ENCODE measurements at regions of chr12 and their contacts with region 1.

Region 1: DNA sequence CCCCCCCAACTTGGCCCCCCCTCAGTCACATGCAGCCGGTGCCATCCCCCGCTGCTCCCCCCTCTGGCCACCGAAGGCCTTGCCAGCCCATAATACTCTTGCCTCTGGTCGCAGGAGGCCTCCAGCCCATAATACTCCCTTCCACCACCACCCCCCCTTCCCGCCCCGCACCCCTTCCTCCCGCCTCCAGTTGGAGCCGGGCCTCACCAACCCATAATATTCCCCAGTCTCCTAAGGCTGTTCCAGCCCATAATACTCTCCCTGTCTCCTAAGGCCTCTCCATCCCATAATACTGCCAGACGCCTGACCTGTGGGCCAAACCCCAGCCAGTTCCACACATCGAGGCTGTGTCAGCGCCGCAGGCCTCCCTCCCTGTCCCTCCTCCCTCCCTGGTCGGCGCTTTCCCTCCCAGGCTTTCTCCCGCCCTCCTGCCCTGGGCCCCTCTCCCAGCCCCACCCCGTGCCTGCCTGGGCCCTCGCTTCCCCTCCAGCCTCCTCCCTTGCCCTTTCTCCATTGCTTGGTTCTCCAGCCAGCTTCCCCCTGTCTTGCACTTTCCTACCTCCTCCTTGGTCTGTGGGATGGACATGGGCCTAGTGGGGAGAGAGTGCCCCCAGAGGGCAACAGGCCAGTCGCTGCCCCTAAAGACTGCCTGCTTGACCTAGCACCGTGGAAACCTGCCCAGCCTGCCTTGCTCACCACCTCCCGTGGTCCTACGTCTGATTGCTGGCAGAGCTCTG is 6.8 kb upstream of the CHD4 start:
- DNase-seq: peak; percentile 80 to 92 (median 90)
- H3K4me3 ChIP-seq: peak overlapping the region in 29 of 59 donors; percentile 1 to 65 (median 23)
- H3K27ac ChIP-seq: peak overlapping the region; percentile 87 to 100 (median 99)
- H3K27me3 ChIP-seq: no peaks in the 10 kb centered on the region
- CTCF ChIP-seq: peak in 15 of 56 donors; percentile 3 to 31 (median 15)

Region 2: DNA sequence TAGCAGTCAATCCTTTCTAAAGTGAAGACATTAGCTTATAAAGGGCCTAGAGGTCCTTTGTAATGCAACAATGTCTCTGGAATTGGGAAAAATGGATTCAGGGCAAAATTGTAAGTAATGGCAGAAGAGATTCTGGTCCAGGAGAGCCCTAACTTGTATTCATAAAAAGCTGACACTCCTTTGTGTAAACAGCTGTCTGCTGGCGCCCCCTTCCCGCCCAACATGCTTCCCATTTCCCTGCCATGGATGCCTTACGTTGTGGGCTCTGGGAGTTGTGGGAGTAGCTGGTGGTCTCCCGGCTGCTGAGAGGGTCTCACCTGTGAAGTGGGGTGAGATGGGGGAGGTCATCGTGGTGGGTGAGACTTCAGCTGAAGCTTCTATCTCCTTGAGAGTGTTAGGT is 31.0 kb after region 1 on chr12:
- intact Hi-C with region 1: loop called in 1 of 2 experiments (anchors 1 kb)
- DNase-seq: peak in 5 of 10 donors; percentile 45 to 73 (median 51)
- H3K4me3 ChIP-seq: no peak overlapping the region
- H3K27ac ChIP-seq: peak overlapping the region in 21 of 59 donors; percentile 0 to 73 (median 48)
- H3K27me3 ChIP-seq: no peaks in the 10 kb centered on the region
- CTCF ChIP-seq: peak in 49 of 56 donors; percentile 11 to 64 (median 43)

Region 3: GRCh38 chr12:6662906-6663742 is 49.2 kb after region 1 on chr12 and contains the start of gene ING4:
- intact Hi-C with region 1: loop called (anchors 1 to 5 kb)
- DNase-seq: peak; percentile 96 to 100 (median 99)
- H3K4me3 ChIP-seq: peak within 1 kb of the TSS; percentile 58 to 95 (median 80)
- H3K27ac ChIP-seq: peak within 1 kb of the TSS in 58 of 59 donors; percentile 25 to 96 (median 82)
- H3K27me3 ChIP-seq: no peaks in the 10 kb centered on the region
- CTCF ChIP-seq: peak in 18 of 56 donors; percentile 3 to 51 (median 14)
- total RNA-seq, gene ING4: 45.0 to 72.1 (median 59.4) TPM

Region 4: DNA sequence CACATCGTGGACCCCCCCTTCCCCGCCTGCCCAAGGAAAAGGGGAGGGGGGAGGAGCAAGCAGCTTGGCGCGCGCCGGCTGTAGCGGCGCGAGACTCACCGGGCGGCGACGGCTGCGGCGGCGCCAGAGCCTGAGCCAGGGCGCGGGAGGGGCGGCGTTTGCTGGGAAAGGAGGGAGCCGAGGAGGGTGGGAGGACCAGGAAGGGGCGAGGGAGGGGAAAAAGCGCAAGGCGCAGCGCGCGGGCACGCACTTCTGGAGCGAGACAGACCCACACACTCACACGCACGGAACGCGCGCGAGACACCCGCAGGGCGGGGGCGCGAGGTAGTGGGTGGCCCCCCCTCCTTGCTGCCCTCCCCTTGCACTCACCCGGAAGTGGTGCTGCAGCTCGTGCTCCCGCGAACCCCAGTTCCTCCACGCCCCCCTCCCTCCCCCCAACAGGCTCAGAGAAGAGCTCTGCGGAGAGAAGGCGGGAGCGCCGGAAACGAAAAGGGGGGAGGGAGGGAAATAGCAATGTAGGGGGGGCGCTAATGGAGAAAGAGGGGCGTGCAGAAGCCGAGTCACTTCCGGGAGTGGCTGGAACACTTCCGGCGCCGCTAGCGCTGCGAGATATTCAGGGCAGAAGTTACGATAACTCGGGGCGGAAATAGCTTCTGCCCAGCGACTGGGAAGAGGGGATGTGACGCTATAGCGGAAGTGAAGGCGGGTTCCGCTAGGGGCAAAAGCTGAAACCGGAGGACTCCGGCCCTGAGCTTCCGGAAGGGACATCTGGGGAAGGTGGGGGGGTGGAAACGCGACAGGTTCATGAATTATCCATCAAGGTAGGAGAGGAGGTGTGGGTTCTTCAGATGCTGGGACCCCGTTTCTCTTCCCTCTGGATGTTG is 75.3 kb after region 1 on chr12 and contains the start of gene ZNF384:
- intact Hi-C with region 1: loop called (anchors 1 to 2 kb)
- DNase-seq: peak; percentile 98 to 100 (median 99)
- H3K4me3 ChIP-seq: peak within 1 kb of the TSS; percentile 64 to 97 (median 88)
- H3K27ac ChIP-seq: peak within 1 kb of the TSS; percentile 74 to 100 (median 98)
- H3K27me3 ChIP-seq: no peaks in the 10 kb centered on the region
- CTCF ChIP-seq: peak in 40 of 56 donors; percentile 7 to 63 (median 36)
- total RNA-seq, gene ZNF384: 37.7 to 73.6 (median 53.6) TPM

Region 5: GRCh38 chr12:6825398-6826124 is 211.6 kb after region 1 on chr12:
- intact Hi-C with region 1: loop called in 1 of 2 experiments (anchors 5 kb)
- DNase-seq: peak; percentile 81 to 93 (median 90)
- H3K4me3 ChIP-seq: peak overlapping the region in 57 of 59 donors; percentile 3 to 81 (median 67)
- H3K27ac ChIP-seq: peak overlapping the region in 49 of 59 donors; percentile 7 to 98 (median 69)
- H3K27me3 ChIP-seq: peaks cover 0 to 6% (median 0%) of the 10 kb centered on the region in 45 donors
- CTCF ChIP-seq: peak; percentile 72 to 98 (median 91)

Region 6: DNA sequence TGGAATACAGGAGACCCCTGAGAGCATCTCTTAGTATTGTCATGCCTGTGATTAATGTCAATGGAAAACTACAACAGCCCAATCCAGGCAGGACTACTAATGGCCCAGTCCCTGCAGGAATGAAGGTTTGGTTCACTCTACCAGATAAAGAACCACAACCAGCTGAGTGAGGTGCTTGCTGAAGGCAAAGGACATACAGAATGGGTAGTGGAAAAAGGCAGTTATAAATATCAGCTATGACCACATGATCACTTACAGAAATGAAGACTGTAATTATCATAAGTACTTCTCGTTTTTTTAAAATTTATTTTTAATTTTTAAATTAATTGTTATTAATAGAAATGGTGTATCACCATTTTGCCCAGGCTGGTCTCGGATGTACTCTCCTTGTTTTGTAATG is 421.5 kb after region 1 on chr12:
- intact Hi-C with region 1: no loop called
- DNase-seq: no peak
- H3K4me3 ChIP-seq: no peak overlapping the region
- H3K27ac ChIP-seq: no peak overlapping the region
- H3K27me3 ChIP-seq: no peaks in the 10 kb centered on the region
- CTCF ChIP-seq: no peak

Measured in dorsolateral prefrontal cortex (tissue), 120 donors.